Heart right ventricle (tissue), 16 donors: ENCODE measurements at regions of chr11 and their contacts with region 1.

Region 1: DNA sequence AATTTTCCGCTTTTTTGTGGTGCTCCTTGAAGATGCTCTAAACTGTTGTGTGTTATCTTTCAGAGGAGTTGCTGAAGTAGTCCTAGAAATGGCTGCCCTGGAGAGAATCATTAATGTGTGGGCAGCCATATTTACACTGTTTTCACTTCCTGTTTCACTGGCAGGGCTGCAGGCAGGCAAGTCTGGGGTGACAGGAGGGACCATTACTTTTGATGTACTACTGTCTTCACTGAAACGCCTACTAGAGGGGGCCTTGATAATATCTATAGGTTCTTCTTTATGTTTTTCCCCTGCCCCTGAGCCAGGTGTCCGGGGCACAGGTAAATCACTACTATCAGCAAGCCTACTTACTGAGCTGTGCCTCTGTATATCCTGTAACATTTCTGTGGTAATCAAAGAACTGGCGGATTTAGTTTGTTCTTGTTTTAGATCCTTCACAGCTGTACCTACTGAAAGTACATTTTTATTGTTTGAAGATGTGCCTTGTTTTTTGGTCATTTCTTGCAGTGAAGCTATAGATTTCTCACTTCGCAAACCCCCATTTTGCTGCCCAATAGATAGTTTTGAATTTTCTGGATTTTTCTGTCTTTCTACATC is 39.7 kb downstream of the ACAT1 start:
- DNase-seq: no peak
- ATAC-seq: no peak
- H3K4me3 ChIP-seq: no peak overlapping the region
- H3K27ac ChIP-seq: no peak overlapping the region
- H3K4me1 ChIP-seq: no peaks in the 10 kb centered on the region
- H3K27me3 ChIP-seq: no peaks in the 10 kb centered on the region
- CTCF ChIP-seq: no peak

Region 2: DNA sequence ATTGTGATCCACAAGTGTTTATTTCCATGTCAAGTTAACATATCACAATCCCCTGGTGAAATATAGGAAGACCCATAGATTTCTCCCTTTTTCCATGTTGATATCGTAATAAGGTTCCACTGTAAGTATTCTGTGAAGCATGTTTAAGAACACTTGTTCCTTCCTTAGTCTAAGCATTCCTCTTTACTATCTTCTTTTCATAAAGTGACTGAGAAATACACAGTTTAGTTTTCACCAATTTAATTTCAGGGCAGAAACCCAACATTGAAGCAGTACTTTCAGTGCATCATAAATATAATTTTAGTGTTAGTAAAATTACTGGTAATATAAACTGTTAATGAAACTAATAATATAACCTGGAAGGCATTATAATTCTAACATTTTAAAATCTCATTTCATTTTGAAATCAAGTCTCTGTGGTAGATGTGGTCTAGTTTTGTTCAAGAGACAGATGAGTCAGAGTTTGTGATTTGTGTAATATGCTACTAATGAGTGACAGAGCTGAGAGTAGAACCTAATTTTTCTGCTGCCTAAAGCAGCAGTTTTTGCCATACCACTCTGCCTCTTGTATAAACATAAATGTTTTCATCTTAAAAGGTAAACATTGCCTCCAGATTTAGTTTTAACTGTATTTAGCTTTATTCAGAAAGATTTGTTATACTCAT is 141.2 kb after region 1 on chr11:
- intact Hi-C with region 1: loop called in 2 of 10 experiments (anchors 10 kb)
- DNase-seq: no peak
- ATAC-seq: no peak
- H3K4me3 ChIP-seq: no peak overlapping the region
- H3K27ac ChIP-seq: no peak overlapping the region
- H3K4me1 ChIP-seq: no peaks in the 10 kb centered on the region
- H3K27me3 ChIP-seq: no peaks in the 10 kb centered on the region
- CTCF ChIP-seq: no peak